HEK293T (cell line): ENCODE measurements at regions of chr2 and their contacts with region 1.

Region 1: DNA sequence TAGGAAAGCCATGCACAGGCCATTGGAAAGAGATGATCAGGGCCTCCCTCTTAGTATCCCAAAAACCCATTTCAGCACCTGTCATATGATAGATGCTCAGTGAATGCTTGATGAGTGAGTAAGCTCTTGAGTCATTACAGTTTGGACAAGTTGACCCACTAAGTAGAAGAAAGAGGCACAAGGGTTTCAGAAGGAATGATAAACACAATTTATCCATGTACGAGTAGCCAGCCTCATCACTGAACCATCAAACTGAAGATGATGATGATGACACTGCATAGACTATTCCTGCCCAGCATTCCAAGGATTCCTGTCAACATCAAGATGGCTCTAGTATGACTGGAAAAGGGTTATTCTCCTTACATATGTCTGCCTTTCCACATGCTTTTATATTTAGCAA is 596.0 kb downstream of the BCL11A start:
- DNase-seq: no peak

Region 2: DNA sequence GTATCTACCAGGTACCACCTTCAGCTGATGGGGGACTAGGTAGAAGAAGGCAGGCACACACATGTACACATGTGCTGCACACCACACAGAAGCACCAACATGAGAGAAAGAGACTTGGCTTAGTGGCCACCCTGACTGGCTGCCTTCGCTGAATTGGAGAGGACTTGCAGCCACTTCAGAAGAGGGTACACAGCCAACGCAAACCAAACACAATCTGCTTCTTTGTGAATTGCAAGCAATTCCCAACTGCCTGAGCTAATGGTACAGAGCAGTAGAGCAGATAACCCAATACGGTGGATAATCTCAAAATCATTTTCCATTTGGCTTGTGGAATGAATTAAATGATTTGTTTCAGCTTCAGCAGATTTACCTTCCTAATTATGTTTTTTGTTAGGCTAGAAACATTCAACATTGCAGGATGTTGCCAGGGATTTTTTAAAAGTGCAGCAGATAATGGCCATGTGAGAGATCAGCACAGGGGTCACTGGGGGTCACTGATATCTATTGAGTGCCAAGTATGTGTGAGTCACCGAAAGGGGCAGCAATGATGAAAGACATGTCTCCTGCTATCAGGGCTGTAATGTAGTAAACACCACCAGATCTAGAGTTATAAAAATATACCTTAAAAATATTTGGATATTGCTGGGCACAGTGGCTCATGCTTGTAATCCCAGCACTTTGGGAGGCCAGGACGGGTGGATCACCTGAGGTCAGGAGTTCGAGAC is 56.6 kb before region 1 on chr2:
- CTCF ChIA-PET with region 1: interaction called, 11 read pairs
- POLR2A ChIA-PET with region 1: no interaction called
- DNase-seq: no peak